PC-9 (cell line): ENCODE measurements at regions of chr7 and their contacts with region 1.

Region 1: GRCh38 chr7:77707504-77707992 is 11.3 kb downstream of the RSBN1L start:
- DNase-seq: no peak
- H3K4me3 ChIP-seq: no peak overlapping the region
- H3K27ac ChIP-seq: no peak overlapping the region
- H3K4me1 ChIP-seq: no peaks in the 10 kb centered on the region
- H3K27me3 ChIP-seq: no peaks in the 10 kb centered on the region
- CTCF ChIP-seq: no peak

Region 2: DNA sequence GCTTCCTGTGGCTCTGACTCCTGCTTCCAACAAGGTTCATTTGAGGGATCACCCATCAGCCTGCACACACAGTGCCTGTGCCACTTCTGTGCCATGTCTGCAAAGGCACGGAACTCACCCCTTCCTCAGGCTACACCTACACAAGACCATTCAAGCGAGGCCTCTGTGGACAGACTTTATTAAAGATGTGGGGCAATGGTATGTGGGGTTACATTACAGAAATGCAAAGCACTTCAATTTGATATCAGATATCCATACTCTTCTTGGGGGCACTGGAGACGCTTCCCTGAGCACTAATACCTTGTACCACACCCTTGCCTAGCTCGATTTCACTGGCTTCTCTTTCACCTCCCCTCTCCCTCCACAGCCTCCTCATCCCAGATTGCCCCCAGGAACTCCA is 423.5 kb before region 1 on chr7:
- CTCF ChIA-PET with region 1: no interaction called
- POLR2A ChIA-PET with region 1: interaction called, 11 read pairs
- intact Hi-C with region 1: no loop called
- DNase-seq: no peak
- H3K4me3 ChIP-seq: no peak overlapping the region
- H3K27ac ChIP-seq: no peak overlapping the region
- H3K4me1 ChIP-seq: no peaks in the 10 kb centered on the region
- H3K27me3 ChIP-seq: no peaks in the 10 kb centered on the region
- CTCF ChIP-seq: no peak

Region 3: GRCh38 chr7:77415823-77416622 is 291.5 kb before region 1 on chr7 and contains the start of gene GSAP:
- CTCF ChIA-PET with region 1: no interaction called
- POLR2A ChIA-PET with region 1: no interaction called
- intact Hi-C with region 1: no loop called
- DNase-seq: peak in 1 of 2 experiments; percentile 61
- H3K4me3 ChIP-seq: peak within 1 kb of the TSS; percentile 87
- H3K27ac ChIP-seq: peak within 1 kb of the TSS; percentile 80
- H3K4me1 ChIP-seq: peaks cover 44% of the 10 kb centered on the region
- H3K27me3 ChIP-seq: no peaks in the 10 kb centered on the region
- CTCF ChIP-seq: no peak
- total RNA-seq, gene GSAP: 15.6 and 17.2 TPM in 2 replicates

Region 4: GRCh38 chr7:78039790-78040776 is 332.5 kb after region 1 on chr7:
- CTCF ChIA-PET with region 1: no interaction called
- POLR2A ChIA-PET with region 1: no interaction called
- intact Hi-C with region 1: no loop called
- DNase-seq: no peak
- H3K4me3 ChIP-seq: no peak overlapping the region
- H3K27ac ChIP-seq: no peak overlapping the region
- H3K4me1 ChIP-seq: no peaks in the 10 kb centered on the region
- H3K27me3 ChIP-seq: no peaks in the 10 kb centered on the region; the same call in 1 of the 2 replicates
- CTCF ChIP-seq: peak; percentile 53; the same call in 1 of the 2 replicates

Region 5: GRCh38 chr7:78662948-78663347 is 955.4 kb after region 1 on chr7:
- CTCF ChIA-PET with region 1: no interaction called
- POLR2A ChIA-PET with region 1: interaction called, 26 read pairs
- intact Hi-C with region 1: no loop called
- DNase-seq: no peak
- H3K4me3 ChIP-seq: no peak overlapping the region
- H3K27ac ChIP-seq: no peak overlapping the region
- H3K4me1 ChIP-seq: no peaks in the 10 kb centered on the region
- H3K27me3 ChIP-seq: no peaks in the 10 kb centered on the region
- CTCF ChIP-seq: no peak